Upper lobe of right lung (tissue), 1 donor: ENCODE measurements at regions of chr15 and their contacts with region 1.

Region 1: DNA sequence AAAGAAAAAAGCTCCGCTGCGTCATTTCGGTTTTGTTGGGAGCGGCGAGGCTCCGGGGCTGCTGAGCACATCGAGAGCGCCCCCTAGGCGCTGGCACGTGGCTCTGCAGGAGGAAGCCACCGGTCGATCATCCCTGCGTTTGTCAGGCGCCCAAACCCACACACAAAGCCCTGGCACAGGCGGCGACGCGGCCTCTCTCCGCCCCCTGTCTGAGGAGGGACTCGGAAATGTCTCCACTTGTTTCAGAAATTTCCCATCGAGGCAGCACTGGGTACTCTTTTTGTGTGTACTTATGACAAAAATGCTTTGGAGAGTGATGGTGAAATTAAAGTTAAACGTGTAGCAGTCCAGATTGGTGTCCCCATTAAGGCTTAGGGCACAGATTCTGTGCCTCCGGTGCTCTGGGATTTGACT is 407.3 kb upstream of the ONECUT1 start:
- DNase-seq: peak; percentile 76
- ATAC-seq: peak; percentile 92
- H3K4me3 ChIP-seq: no peak overlapping the region
- H3K27ac ChIP-seq: no peak overlapping the region
- H3K4me1 ChIP-seq: peaks cover 7% of the 10 kb centered on the region
- H3K27me3 ChIP-seq: peaks cover 8% of the 10 kb centered on the region
- CTCF ChIP-seq: peak; percentile 85

Region 2: DNA sequence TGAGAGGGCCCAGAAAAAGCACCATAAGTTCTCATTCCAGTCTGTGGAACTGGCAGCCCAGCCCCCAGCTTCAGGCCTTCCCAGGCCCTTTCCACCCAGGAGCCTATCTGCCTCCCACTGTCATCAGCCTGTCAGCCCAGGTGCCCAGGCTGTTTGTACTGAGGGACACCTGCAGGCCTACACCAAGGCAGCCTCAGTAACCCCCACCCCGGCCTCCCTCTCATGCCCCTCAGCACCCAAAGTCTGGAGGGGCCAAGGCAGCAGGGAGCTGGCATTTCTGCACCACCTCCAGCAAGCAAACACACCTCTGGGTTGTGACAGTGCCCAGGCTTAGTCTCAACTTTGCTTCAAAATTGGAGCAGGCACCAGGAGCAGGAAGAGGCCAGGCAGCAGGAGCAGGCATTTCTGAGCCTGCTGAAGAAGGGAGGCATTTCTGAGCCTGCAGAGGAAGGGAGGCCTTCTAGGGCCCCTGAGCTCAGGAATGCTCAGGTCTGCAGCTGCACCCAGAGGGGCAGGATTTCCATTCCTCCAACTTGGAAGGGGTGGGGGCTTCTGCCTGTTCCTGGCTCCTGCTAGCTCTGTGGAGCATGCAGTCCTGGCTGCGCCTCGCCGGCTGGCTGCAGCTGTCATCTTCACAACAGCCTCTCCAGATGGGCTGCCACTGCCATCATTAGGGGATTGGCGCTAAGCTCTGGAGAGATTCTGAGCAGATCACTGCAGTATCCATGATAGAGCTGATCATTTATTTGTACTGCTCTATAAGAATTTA is 1176.9 kb after region 1 on chr15:
- intact Hi-C with region 1: loop called (anchors 10 kb)
- DNase-seq: no peak
- ATAC-seq: peak; percentile 23
- H3K4me3 ChIP-seq: no peak overlapping the region
- H3K27ac ChIP-seq: no peak overlapping the region
- H3K4me1 ChIP-seq: no peaks in the 10 kb centered on the region
- H3K27me3 ChIP-seq: peaks cover 3% of the 10 kb centered on the region
- CTCF ChIP-seq: no peak